Mammary epithelial cell (primary cell): ENCODE measurements at regions of chr3 and their contacts with region 1.

Region 1: DNA sequence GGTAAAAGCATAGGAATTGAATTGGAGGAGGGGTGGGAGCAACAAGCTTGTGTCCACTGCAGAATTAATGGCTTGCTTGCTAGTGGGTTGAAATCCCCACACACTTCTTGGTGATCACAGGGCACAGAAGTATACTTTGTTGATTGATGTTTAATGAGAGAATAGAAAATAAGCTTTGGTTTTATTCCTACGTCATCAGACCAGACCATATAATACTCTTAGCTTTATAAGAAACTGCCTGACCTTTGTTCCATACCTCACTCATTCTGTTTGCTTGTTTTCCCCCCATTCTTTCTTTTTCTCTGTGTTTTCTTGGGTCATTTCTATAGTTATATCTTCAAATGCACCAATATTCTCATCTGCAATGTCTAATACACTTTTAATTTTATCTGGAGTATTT is 181.3 kb downstream of the GRM7 start:
- DNase-seq: no peak
- H3K4me3 ChIP-seq: no peak overlapping the region
- H3K27ac ChIP-seq: no peak overlapping the region
- H3K4me1 ChIP-seq: no peaks in the 10 kb centered on the region
- H3K27me3 ChIP-seq: no peaks in the 10 kb centered on the region
- CTCF ChIP-seq: no peak

Region 2: GRCh38 chr3:6928064-6928463 is 114.2 kb before region 1 on chr3:
- CTCF ChIA-PET with region 1: no interaction called
- dilution Hi-C with region 1: no loop called
- in situ Hi-C with region 1: no loop called
- intact Hi-C with region 1: no loop called
- DNase-seq: peak; percentile 16
- H3K4me3 ChIP-seq: no peak overlapping the region
- H3K27ac ChIP-seq: no peak overlapping the region
- H3K4me1 ChIP-seq: no peaks in the 10 kb centered on the region
- H3K27me3 ChIP-seq: no peaks in the 10 kb centered on the region
- CTCF ChIP-seq: no peak

Region 3: DNA sequence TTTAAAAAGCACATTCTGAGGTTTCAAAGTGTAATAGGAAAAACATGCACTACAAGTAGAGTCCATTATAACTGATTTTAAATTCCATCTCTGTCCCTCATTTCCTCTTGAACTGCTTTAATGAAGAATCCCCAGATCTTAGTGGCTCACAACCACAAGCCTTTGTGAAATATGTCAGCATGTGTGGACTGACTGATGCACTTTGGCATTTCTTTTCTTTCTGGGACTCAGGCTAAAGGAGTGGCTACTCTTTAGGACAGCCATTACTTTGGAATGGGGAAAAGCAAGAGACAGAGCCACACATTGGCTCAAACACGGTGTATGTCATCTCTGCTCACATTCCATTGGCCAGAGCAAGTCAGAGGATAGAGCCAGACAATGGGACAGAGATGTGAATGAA is 41.7 kb before region 1 on chr3:
- CTCF ChIA-PET with region 1: no interaction called
- dilution Hi-C with region 1: loop called (anchors 5 kb)
- in situ Hi-C with region 1: no loop called
- intact Hi-C with region 1: no loop called
- DNase-seq: no peak
- H3K4me3 ChIP-seq: no peak overlapping the region
- H3K27ac ChIP-seq: no peak overlapping the region
- H3K4me1 ChIP-seq: no peaks in the 10 kb centered on the region
- H3K27me3 ChIP-seq: no peaks in the 10 kb centered on the region
- CTCF ChIP-seq: no peak

Region 4: DNA sequence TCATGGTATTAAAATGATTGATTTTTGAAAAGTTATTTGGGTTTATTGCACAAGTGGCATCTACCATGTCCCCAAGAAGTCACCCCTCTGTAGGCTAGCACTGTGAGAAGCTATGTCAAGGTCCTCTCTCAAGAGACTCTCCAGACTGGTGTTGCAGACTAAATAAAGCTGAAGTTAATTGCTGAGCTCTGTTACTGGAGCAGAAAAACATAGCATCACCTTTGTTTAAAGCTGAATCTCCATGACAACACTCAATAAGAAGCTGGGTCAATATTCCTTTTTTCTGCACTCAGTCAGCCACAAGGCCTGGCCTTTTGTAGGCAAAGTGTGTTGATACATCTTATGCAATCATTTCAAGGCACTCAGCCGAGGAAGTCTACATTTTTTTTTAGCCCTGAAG is 652.8 kb after region 1 on chr3:
- CTCF ChIA-PET with region 1: no interaction called
- dilution Hi-C with region 1: no loop called
- in situ Hi-C with region 1: no loop called
- intact Hi-C with region 1: no loop called
- DNase-seq: no peak
- H3K4me3 ChIP-seq: no peak overlapping the region
- H3K27ac ChIP-seq: no peak overlapping the region
- H3K4me1 ChIP-seq: no peaks in the 10 kb centered on the region
- H3K27me3 ChIP-seq: no peaks in the 10 kb centered on the region
- CTCF ChIP-seq: no peak